ENCODE measurements at regions of chr15 and their contacts with region 1.

Region 1: GRCh38 chr15:78739996-78740903 is 71.0 kb downstream of the ADAMTS7 start:
- DNase-seq: peak in 1 of 2 experiments; percentile 88
- ATAC-seq: peak; percentile 84 to 97
- H3K4me3 ChIP-seq: no peak overlapping the region
- H3K27ac ChIP-seq: peak overlapping the region; percentile 65 to 80
- H3K4me1 ChIP-seq: peaks cover 4% of the 10 kb centered on the region
- CTCF ChIP-seq: peak; percentile 69
- EP300 ChIP-seq: no peak
- POLR2A ChIP-seq: no peak
- RAD21 ChIP-seq: peak; percentile 60 to 67

Region 2: GRCh38 chr15:78599189-78599588 is 141.1 kb before region 1 on chr15:
- CTCF ChIA-PET with region 1: no interaction called
- POLR2A ChIA-PET with region 1: no interaction called
- DNase-seq: no peak
- ATAC-seq: no peak
- H3K4me3 ChIP-seq: no peak overlapping the region
- H3K27ac ChIP-seq: no peak overlapping the region
- H3K4me1 ChIP-seq: no peaks in the 10 kb centered on the region
- CTCF ChIP-seq: no peak
- EP300 ChIP-seq: no peak
- POLR2A ChIP-seq: no peak
- RAD21 ChIP-seq: no peak

Region 3: DNA sequence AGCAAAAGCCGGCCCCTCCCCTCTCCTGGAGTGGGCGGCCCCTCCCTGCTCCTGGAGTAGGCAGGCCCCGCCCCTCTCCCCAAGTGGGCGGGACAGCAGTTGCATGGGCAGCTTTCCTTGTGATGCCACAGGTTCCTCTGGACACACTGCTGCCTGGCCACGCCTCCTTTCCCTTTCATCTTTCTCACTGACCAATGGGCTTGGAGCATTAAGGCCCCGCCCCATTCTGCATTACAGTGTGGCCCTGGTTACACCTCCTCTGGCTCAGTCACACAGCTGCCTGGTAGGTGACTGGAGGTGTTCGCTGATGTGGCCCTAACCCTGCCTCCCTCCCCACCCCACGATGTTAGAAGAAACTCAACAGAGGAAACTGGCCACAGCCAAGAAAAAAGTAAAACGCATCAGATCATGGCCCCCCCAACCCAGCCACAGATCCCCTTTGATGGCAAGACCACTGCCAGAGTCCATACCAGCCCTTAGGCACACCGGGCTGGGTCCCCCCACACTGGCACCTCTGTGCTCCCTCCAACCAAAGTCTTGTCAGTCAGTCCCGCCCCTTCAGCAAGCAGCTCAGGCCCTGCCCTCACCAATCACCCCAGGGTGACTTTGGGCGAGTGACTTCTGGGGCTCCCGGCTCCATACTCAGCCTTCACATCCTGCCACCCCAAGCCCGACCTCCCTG is 13.2 kb before region 1 on chr15:
- CTCF ChIA-PET with region 1: interaction called, 44 read pairs
- POLR2A ChIA-PET with region 1: no interaction called
- DNase-seq: peak; percentile 44 to 81
- ATAC-seq: peak; percentile 59 to 77
- H3K4me3 ChIP-seq: no peak overlapping the region
- H3K27ac ChIP-seq: peak overlapping the region; percentile 51 to 68; a peak in 5 of 6 replicates
- H3K4me1 ChIP-seq: peaks cover 26% of the 10 kb centered on the region
- CTCF ChIP-seq: no peak
- EP300 ChIP-seq: no peak
- POLR2A ChIP-seq: no peak
- RAD21 ChIP-seq: no peak